Activated naive CD4-positive, alpha-beta T cell treated with anti-CD3 and anti-CD28 coated beads for 36 hours (primary cell): ENCODE measurements at regions of chr12 and their contacts with region 1.

Region 1: GRCh38 chr12:101859664-101860607 is 17.4 kb upstream of the DRAM1 start:
- DNase-seq: no peak
- H3K4me3 Mint-ChIP-seq: no peak overlapping the region
- H3K27ac Mint-ChIP-seq: peak overlapping the region; percentile 54
- H3K4me1 Mint-ChIP-seq: peaks cover 24% of the 10 kb centered on the region
- H3K27me3 Mint-ChIP-seq: peaks cover 2% of the 10 kb centered on the region

Region 2: GRCh38 chr12:101792051-101792931 is 67.6 kb before region 1 on chr12:
- CTCF ChIA-PET with region 1: no interaction called
- intact Hi-C with region 1: loop called (anchors 1 kb)
- DNase-seq: no peak
- H3K4me3 Mint-ChIP-seq: no peak overlapping the region
- H3K27ac Mint-ChIP-seq: no peak overlapping the region
- H3K4me1 Mint-ChIP-seq: peaks cover 22% of the 10 kb centered on the region
- H3K27me3 Mint-ChIP-seq: no peaks in the 10 kb centered on the region

Region 3: DNA sequence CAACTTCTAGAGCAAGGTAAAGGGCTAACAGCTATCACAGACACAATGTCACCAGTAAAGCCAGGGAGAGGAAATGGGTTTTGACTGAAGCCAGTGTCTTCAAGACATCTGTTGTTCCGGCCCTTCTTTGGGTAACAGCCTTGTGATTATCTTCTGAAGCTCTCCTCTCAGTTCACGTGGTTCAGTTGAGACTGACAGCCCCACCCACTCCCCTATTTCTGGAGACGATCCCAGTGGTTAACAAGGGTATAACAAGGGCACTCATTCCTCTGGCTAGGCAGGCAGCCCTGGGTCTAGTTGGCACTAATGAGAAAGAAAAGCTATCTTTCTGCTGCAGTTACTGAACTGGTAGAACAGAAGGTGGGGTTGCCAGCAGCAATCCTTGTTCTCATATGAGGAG is 36.0 kb before region 1 on chr12:
- CTCF ChIA-PET with region 1: no interaction called
- intact Hi-C with region 1: loop called (anchors 1 kb)
- DNase-seq: peak; percentile 74
- H3K4me3 Mint-ChIP-seq: no peak overlapping the region
- H3K27ac Mint-ChIP-seq: peak overlapping the region; percentile 48
- H3K4me1 Mint-ChIP-seq: peaks cover 76% of the 10 kb centered on the region
- H3K27me3 Mint-ChIP-seq: no peaks in the 10 kb centered on the region

Region 4: DNA sequence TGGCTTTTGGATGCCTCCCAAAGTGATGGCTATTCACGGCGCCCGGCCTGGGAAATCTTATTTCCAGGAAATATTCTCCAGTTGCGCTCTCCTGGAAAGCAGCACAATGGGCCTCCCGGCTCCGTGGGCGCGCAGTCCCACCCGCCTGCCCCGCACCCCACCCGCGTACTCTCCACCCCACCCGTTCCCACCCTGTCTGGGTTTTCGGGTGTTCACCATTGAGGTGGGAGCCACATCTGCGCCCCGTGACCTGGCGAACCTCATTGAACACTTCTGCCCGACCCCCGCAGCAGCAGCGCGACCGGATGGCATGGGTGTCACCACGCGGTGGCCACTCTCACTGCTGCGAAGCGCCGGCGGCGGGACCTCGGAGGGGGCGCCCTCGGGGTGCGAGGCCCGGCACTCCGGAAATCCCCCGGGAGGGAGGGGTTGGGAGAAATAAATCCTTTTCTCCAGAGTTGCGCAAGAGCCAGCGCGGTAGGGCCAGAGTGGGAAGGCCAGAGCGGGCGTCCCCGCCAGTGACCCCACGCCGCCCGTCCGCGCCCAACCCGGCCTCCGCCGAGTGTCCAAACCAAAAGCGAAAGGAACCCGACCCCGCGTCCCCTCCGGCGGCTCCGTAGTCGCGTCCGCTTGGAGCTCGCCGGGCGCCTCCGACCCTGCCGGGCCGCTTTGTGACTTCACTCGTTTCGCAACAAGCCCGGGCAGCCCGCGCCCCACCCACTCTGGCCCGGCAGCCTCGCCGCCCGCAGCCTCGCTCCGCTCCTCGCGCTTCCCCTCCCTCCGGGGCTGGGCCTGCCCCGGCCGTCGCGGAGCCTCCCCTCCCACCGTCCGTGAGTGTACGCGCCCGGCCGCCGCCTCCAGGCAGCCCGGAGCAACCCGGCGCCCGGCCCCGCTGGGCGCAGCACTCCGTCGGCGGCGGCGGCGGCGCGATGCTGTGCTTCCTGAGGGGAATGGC is 17.2 kb after region 1 on chr12 and contains the start of gene DRAM1:
- CTCF ChIA-PET with region 1: no interaction called
- intact Hi-C with region 1: loop called (anchors 1 kb)
- DNase-seq: peak; percentile 83
- H3K4me3 Mint-ChIP-seq: peak within 1 kb of the TSS; percentile 91
- H3K27ac Mint-ChIP-seq: peak within 1 kb of the TSS; percentile 64
- H3K4me1 Mint-ChIP-seq: peaks cover 12% of the 10 kb centered on the region
- H3K27me3 Mint-ChIP-seq: peaks cover 3% of the 10 kb centered on the region
- total RNA-seq, gene DRAM1: 4.1 to 4.9 TPM

Region 5: GRCh38 chr12:102197789-102198188 is 337.9 kb after region 1 on chr12 and contains the start of gene PMCH:
- CTCF ChIA-PET with region 1: no interaction called
- intact Hi-C with region 1: loop called (anchors 1 kb)
- DNase-seq: no peak
- H3K4me3 Mint-ChIP-seq: no peak within 1 kb of the TSS
- H3K27ac Mint-ChIP-seq: no peak within 1 kb of the TSS
- H3K4me1 Mint-ChIP-seq: peaks cover 8% of the 10 kb centered on the region
- H3K27me3 Mint-ChIP-seq: no peaks in the 10 kb centered on the region
- total RNA-seq, gene PMCH: not detected